ENCODE measurements at regions of chr20 and their contacts with region 1.

Region 1: GRCh38 chr20:62822788-62823651 is 6.2 kb downstream of the COL9A3 start:
- DNase-seq: no peak
- ATAC-seq: peak; percentile 88
- H3K4me3 ChIP-seq: no peak overlapping the region
- H3K27ac ChIP-seq: no peak overlapping the region
- H3K4me1 ChIP-seq: 0 out of 2 replicates have a peak, but pooled peaks cover 2% of the 10 kb centered on the region
- H3K27me3 ChIP-seq: peaks cover 0 to 2% of the 10 kb centered on the region in 2 experiments; a peak in 3 of 4 replicates
- CTCF ChIP-seq: peak; percentile 69 to 80 (median 74)
- EP300 ChIP-seq: no peak
- POLR2A ChIP-seq: no peak
- RAD21 ChIP-seq: peak; percentile 72

Region 2: DNA sequence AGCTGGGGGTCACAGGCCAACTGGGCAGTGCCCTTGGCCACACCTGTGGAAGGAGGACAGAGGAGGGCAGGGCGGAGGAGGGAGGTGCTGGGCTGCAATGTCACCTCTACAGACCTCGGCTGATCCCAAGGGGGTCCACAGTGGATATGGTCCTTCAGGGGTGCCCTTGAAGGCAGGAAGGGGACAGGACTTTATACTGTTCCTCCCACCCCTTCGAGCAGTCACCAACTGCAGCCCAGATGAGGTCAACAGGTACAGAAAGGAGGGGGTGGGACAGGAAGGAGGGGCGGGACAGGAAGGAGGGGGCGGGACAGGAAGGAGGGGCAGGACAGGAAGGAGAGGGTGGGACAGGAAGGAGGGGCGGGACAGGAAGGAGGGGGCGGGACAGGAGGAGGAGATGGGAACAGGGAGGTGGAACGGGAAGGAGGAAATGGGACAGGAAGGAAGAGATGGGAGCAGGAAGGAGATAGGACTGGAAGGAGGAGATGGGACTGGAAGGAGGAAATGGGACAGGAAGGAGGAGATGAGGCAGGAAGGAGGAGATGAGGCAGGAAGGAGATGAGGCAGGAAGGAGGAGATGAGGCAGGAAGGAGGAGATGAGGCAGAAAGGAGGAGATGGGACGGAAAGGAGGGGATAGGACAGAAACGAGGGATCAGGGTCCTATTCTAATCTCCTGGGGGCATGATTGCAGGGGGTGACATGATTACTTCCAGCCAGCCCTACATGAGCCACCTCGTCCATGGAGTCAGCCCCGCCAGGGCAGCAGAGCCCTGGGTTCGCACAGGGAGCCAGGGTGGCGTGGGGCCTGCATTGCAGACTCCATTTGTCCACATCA is 46.1 kb before region 1 on chr20:
- CTCF ChIA-PET with region 1: no interaction called
- POLR2A ChIA-PET with region 1: no interaction called
- RAD21 ChIA-PET with region 1: no interaction called
- SMC1A ChIA-PET with region 1: no interaction called
- in situ Hi-C with region 1: loop called (anchors 5 kb)
- intact Hi-C with region 1: no loop called
- DNase-seq: peak; percentile 21
- ATAC-seq: peak; percentile 75
- H3K4me3 ChIP-seq: no peak overlapping the region
- H3K27ac ChIP-seq: peak overlapping the region; percentile 42; the same call in 1 of the 2 replicates
- H3K4me1 ChIP-seq: peaks cover 10% of the 10 kb centered on the region
- H3K27me3 ChIP-seq: peaks cover 0 to 1% of the 10 kb centered on the region in 2 experiments; a peak in 1 of 4 replicates
- CTCF ChIP-seq: no peak
- EP300 ChIP-seq: no peak
- POLR2A ChIP-seq: peak; percentile 64
- RAD21 ChIP-seq: no peak

Region 3: GRCh38 chr20:62946918-62947317 is 123.9 kb after region 1 on chr20:
- CTCF ChIA-PET with region 1: no interaction called
- POLR2A ChIA-PET with region 1: no interaction called
- RAD21 ChIA-PET with region 1: no interaction called
- SMC1A ChIA-PET with region 1: no interaction called
- in situ Hi-C with region 1: no loop called
- intact Hi-C with region 1: no loop called
- DNase-seq: no peak
- ATAC-seq: no peak
- H3K4me3 ChIP-seq: no peak overlapping the region
- H3K27ac ChIP-seq: no peak overlapping the region
- H3K4me1 ChIP-seq: no peaks in the 10 kb centered on the region
- H3K27me3 ChIP-seq: no peaks in the 10 kb centered on the region
- CTCF ChIP-seq: no peak
- EP300 ChIP-seq: no peak
- POLR2A ChIP-seq: 0 out of 2 replicates have a peak, but pooled peaks have one; percentile 36
- RAD21 ChIP-seq: no peak